ENCODE measurements at regions of chr13 and their contacts with region 1.

Region 1: DNA sequence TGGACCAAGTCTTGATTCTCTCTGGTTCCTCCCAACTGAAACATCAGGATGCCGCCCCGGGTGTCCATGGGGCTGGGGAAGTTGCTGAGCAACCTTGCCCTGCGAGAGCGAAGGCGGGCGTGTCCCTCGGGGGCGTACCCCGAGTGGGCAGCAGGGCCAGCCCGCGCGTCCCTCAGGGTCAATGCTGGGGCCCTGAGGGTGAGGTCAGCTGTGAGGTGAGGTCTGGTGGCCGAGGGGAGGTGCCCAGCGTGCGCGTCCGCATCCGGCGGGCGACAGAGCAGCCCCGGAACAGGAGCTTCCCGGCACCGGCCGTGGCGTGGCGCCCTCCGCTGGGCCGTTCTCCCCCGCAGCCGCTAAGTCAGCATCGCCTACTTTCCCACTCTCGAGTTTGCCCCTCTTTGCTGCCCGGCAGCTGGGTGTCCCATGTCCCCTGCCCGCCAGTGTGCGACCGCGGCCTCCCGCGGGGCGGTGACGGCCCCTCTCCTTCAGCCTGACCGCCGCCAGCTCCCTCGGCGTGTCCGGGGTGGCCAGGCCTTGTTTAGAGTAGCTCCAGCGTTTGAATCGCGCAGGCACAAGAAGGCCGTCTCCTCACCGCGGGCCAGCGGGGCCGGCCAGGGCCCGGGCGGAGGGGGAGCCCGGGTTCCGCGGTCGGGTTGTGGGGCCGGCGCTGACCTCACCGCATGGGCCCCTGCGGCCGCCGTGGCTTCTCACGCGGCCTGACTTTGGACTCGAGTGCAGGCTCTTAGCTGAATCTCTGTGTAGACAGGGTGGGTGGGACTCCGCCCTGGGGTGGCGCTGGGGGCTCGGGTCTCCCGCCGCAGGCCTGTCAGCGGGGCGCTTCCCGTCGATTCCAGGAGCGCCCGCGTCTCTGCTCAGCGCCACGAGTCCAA is 33.0 kb downstream of the GJA3 start:
- DNase-seq: peak; percentile 57 to 62
- H3K4me3 ChIP-seq: peak overlapping the region; percentile 72
- H3K27ac ChIP-seq: peak overlapping the region; percentile 65
- H3K4me1 ChIP-seq: 0 out of 2 replicates have a peak, but pooled peaks cover 10% of the 10 kb centered on the region
- H3K27me3 ChIP-seq: no peaks in the 10 kb centered on the region
- CTCF ChIP-seq: peak; percentile 43; the same call in 1 of the 2 replicates

Region 2: DNA sequence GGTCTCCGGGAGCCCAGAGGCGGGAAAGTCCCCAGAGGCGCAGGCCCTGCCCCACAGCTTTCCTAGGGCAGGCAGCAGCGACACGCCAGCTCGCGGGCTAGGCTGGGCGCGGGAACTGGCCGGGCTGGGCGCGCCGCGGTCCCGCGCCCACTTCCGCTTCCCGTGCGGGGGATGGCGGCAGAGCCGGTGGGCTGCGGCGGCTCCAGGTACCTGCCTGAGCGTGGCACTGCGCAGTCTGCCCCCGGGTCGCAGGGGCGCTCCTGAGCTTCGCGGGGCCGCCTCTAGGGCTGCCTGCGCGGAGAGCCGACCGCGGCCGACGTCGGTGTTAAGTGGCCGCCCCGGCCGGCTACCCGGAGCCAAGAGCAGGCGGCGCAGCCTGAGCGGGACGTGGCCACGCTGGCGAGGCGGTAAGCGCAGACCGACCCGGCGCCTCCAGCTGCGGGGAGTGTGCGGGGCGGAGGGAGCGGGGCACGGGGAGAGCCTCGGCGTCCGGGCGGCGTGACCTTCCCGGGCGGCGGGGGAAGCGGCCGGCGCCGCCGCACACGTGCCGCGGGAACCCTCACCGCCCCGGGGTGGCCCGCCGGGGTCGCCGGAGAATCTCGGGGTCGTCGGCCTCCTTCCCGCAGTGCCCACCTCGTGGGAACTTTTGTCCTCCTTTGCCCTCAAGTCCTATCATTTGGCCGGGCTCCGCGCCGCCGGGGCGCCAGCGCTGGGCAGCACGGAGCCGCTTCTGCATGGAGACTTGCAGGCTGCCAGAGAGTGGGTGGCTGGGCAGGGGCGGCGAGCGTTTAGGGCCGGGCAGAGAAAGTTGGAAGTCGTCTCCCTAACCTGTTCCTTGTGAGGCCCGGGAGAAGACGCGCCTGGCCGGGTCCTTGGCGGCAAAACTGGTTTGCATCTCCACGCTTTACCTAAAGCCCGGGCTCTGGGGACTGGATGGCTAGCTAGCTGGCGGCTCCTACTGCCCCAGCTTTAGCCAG is 525.8 kb before region 1 on chr13:
- CTCF ChIA-PET with region 1: no interaction called
- POLR2A ChIA-PET with region 1: no interaction called
- intact Hi-C with region 1: loop called (anchors 10 kb)
- DNase-seq: peak in 1 of 2 experiments; percentile 46
- H3K4me3 ChIP-seq: peak overlapping the region; percentile 87
- H3K27ac ChIP-seq: no peak overlapping the region
- H3K4me1 ChIP-seq: peaks cover 26% of the 10 kb centered on the region
- H3K27me3 ChIP-seq: no peaks in the 10 kb centered on the region
- CTCF ChIP-seq: 0 out of 2 replicates have a peak, but pooled peaks have one; percentile 33

Region 3: DNA sequence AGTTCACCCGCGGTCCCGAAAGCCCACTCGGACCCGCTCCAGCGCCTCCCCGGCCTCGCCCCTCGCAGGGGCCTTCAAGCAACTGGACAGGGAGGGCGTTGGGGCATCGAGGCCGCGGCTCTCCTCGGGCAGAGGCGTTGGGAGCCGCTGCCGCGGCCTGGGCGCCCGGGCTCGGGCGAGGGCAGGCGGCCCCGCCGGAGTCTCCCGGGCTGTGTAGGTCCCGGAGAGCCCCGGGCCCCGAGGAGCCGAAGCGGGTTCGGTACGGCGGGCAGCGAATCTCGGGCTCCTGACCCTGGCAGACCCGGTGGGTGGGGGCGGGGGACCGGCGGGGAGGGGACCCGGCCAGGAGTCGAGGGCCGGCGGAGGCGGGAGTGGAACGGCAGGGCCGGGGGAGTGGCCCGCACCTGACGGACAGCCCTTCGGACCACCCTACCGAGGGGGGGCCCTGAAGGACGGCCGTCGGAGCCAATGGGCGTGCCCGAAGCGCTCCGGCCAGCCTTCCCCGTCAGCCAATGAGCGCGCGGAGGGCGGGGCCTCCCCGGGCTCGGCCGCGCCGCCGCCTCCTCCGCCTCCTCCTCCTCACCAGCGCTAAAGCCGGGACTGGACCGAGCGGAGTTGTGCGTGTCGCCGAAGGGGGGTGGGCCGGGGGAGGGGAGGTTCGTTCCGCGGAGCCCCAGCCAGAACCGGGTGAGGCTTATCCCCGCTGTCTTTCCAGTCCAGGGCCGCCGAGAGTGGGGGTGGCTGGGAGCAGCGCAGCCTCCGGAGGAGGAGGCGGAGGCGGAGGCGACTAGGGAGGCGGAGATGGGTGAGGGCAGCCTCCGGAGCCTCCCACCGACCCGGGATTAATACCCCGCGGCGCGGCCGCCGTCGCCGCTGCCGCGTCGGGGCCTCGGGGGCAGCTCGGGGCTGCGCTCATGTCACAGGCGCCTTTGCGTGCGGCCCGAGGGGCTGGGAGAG is 169.4 kb before region 1 on chr13 and contains the start of gene ZMYM2:
- CTCF ChIA-PET with region 1: no interaction called
- POLR2A ChIA-PET with region 1: no interaction called
- intact Hi-C with region 1: no loop called
- DNase-seq: peak; percentile 80 to 97
- H3K4me3 ChIP-seq: peak within 1 kb of the TSS; percentile 76
- H3K27ac ChIP-seq: peak within 1 kb of the TSS; percentile 48
- H3K4me1 ChIP-seq: peaks cover 16% of the 10 kb centered on the region
- H3K27me3 ChIP-seq: no peaks in the 10 kb centered on the region
- CTCF ChIP-seq: no peak
- total RNA-seq, gene ZMYM2: 47.1 and 55.1 TPM in 2 replicates